ENCODE measurements at regions of chr17 and their contacts with region 1.

Region 1: GRCh38 chr17:4199818-4200402 is 56.9 kb downstream of the CYB5D2 start:
- DNase-seq: peak; percentile 59 to 81
- ATAC-seq: peak; percentile 76 to 84; a peak in 5 of 6 replicates
- H3K4me3 ChIP-seq: no peak overlapping the region
- H3K27ac ChIP-seq: no peak overlapping the region
- H3K4me1 ChIP-seq: no peaks in the 10 kb centered on the region
- CTCF ChIP-seq: peak; percentile 81
- EP300 ChIP-seq: no peak
- POLR2A ChIP-seq: no peak
- RAD21 ChIP-seq: peak; percentile 62

Region 2: GRCh38 chr17:4161179-4161559 is 38.7 kb before region 1 on chr17:
- CTCF ChIA-PET with region 1: interaction called, 18 read pairs
- POLR2A ChIA-PET with region 1: no interaction called
- DNase-seq: peak; percentile 90 to 98
- ATAC-seq: peak; percentile 89 to 94
- H3K4me3 ChIP-seq: no peak overlapping the region
- H3K27ac ChIP-seq: peak overlapping the region; percentile 90
- H3K4me1 ChIP-seq: peaks cover 39% of the 10 kb centered on the region
- CTCF ChIP-seq: no peak
- EP300 ChIP-seq: no peak
- POLR2A ChIP-seq: no peak
- RAD21 ChIP-seq: no peak

Region 3: GRCh38 chr17:4175921-4176807 is 23.7 kb before region 1 on chr17:
- CTCF ChIA-PET with region 1: interaction called, 13 read pairs
- POLR2A ChIA-PET with region 1: interaction called, 3 read pairs
- DNase-seq: no peak
- ATAC-seq: no peak
- H3K4me3 ChIP-seq: no peak overlapping the region
- H3K27ac ChIP-seq: no peak overlapping the region
- H3K4me1 ChIP-seq: no peaks in the 10 kb centered on the region
- CTCF ChIP-seq: no peak
- EP300 ChIP-seq: no peak
- POLR2A ChIP-seq: no peak
- RAD21 ChIP-seq: no peak

Region 4: GRCh38 chr17:4187076-4187475 is 12.8 kb before region 1 on chr17:
- CTCF ChIA-PET with region 1: interaction called, 24 read pairs
- POLR2A ChIA-PET with region 1: no interaction called
- DNase-seq: no peak
- ATAC-seq: no peak
- H3K4me3 ChIP-seq: no peak overlapping the region
- H3K27ac ChIP-seq: no peak overlapping the region
- H3K4me1 ChIP-seq: no peaks in the 10 kb centered on the region
- CTCF ChIP-seq: no peak
- EP300 ChIP-seq: no peak
- POLR2A ChIP-seq: no peak
- RAD21 ChIP-seq: no peak

Region 5: DNA sequence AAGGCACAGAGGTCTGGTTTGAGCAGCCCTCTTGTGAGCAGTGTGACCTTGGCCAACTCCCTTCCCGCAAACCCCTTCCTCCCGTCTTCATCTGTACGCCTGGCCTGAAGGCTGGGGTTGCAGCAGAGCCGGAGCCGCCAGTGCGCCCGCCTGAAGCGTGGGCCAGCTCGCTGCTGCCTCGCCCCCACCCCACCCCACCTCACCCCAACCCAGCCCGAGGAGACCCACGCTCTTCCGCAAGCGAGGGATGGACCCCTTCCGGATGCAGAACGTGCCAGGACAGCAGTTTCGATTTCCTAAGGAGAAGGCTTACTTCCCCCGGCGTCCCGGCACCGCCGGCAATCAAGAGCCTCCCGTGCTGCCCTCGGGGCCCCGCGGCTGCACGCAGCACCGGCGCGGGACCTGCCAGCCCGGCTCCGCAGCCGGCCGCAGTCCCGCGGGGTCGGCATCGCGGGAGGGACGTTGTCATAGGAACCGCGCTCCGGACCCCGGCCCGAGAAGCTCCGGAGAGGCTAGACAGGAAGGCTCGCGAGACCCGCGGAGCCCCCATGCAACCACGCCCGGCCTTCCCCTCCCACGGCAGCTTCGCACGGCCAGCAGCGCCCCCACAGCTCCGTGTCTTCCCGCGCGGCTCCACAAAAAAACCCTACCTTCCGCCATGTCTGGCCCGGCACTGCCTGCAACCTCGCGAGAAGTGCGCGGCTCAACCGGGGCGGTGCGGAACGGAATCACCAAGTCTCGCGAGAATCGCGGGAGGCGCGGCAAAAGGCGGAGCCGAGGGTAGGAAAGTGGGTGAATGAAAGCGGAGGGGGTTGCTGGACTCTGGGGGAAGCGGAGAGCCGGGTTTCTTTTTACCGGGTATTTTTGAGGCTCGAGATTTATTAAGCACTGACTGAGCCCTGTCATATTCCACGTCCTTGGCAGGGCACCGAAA is 63.6 kb after region 1 on chr17 and contains the start of gene ANKFY1:
- CTCF ChIA-PET with region 1: interaction called, 12 read pairs
- POLR2A ChIA-PET with region 1: interaction called, 3 read pairs
- DNase-seq: peak; percentile 94 to 99
- ATAC-seq: peak; percentile 92 to 97
- H3K4me3 ChIP-seq: peak within 1 kb of the TSS; percentile 88
- H3K27ac ChIP-seq: peak within 1 kb of the TSS; percentile 90 to 94
- H3K4me1 ChIP-seq: peaks cover 15% of the 10 kb centered on the region
- CTCF ChIP-seq: no peak
- EP300 ChIP-seq: no peak
- POLR2A ChIP-seq: peak; percentile 89
- RAD21 ChIP-seq: no peak; a peak in 1 of 5 replicates
- polyA plus RNA-seq, gene ANKFY1: 51.7 and 63.3 TPM in 2 replicates

Region 6: GRCh38 chr17:4407851-4408250 is 207.9 kb after region 1 on chr17:
- CTCF ChIA-PET with region 1: interaction called, 157 read pairs
- POLR2A ChIA-PET with region 1: no interaction called
- DNase-seq: no peak
- ATAC-seq: no peak
- H3K4me3 ChIP-seq: no peak overlapping the region
- H3K27ac ChIP-seq: no peak overlapping the region
- H3K4me1 ChIP-seq: no peaks in the 10 kb centered on the region
- CTCF ChIP-seq: no peak
- EP300 ChIP-seq: no peak
- POLR2A ChIP-seq: no peak
- RAD21 ChIP-seq: no peak

Region 7: DNA sequence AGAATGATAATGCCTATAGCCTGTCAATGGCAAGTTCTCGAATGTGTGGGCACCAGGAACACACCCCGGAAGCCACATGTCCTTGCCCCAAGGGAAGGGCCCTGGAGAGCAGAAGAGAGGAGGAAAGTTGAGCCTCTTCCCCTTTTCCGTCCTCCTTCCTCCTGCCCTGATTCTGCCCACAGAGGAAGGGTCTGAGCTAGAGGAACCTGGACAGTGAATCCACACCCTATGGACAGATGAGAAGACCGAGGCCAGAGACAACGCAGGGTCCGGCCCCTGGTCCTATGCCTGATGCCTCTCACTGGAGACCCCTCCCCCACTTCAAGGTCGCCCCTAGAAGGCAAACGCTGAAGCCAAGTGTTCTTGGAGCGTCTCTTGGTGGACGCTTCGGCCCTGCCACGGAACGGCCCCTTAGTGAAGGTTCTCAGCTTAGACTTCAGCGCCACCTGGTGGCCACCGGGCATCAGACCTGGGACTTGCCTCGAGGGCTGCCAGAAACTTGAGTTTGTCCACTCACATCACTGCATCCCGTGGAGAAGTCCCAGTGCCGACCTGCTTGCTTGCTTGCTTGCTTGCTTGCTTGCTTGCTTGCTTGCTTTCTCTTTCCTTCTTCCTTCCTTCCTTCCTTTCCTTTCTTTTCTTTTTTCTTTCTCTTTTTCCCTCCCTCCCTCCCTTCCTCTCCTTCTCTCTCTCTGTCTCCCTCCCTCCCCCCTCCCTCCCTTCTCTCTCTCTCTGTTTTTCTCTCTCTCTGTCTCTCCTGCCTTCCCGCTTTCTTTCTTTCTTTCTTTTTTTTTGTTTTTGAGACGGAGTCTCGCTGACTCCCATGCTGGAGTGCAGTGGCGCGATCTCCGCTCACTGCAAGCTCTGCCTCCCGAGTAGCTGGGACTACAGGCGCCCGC is 213.3 kb after region 1 on chr17:
- CTCF ChIA-PET with region 1: interaction called, 157 read pairs
- POLR2A ChIA-PET with region 1: no interaction called
- DNase-seq: peak; percentile 91 to 92
- ATAC-seq: peak; percentile 99 to 100
- H3K4me3 ChIP-seq: no peak overlapping the region
- H3K27ac ChIP-seq: no peak overlapping the region
- H3K4me1 ChIP-seq: no peaks in the 10 kb centered on the region
- CTCF ChIP-seq: peak; percentile 98
- EP300 ChIP-seq: no peak
- POLR2A ChIP-seq: no peak
- RAD21 ChIP-seq: peak; percentile 99 to 100

Measured in A549 (cell line).